Ovary (tissue), 10 donors: ENCODE measurements at regions of chr11 and their contacts with region 1.

Region 1: DNA sequence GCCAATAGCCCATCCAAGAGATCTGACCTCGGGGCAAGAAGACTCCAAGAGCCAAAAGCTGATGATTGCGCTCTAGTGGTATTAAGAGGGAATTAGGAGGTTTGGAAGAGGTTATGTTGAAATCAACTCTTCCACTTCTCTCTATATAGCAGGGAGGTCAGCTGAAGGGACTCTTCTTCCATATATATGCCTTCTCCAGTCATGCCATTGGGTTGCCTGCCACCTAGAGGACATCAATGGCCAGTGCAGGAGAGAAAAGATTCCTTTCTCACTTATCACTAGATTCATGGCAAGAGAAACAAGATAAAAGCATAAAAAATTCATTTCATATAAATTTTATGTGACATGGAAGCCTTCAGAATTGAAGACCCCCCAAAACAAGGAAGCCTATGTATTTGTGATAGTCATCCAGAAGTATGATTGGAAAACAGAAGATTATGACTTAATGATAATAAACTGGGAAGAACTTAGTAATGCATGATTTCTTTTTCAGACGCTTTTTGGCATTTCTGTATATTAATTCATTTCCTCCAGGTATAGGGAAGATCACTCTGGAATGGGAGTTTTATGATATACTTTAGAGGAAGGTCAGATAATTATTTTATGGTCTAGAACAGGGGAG is 435.1 kb upstream of the DDI1 start:
- DNase-seq: no peak
- H3K4me3 ChIP-seq: no peak overlapping the region
- H3K27ac ChIP-seq: no peak overlapping the region
- H3K4me1 ChIP-seq: no peaks in the 10 kb centered on the region
- H3K27me3 ChIP-seq: no peaks in the 10 kb centered on the region
- CTCF ChIP-seq: no peak
- EP300 ChIP-seq: no peak
- POLR2A ChIP-seq: no peak

Region 2: GRCh38 chr11:103619480-103619879 is 18.1 kb after region 1 on chr11:
- intact Hi-C with region 1: loop called in 1 of 4 experiments (anchors 1 kb)
- DNase-seq: no peak
- H3K4me3 ChIP-seq: no peak overlapping the region
- H3K27ac ChIP-seq: no peak overlapping the region
- H3K4me1 ChIP-seq: no peaks in the 10 kb centered on the region
- H3K27me3 ChIP-seq: no peaks in the 10 kb centered on the region
- CTCF ChIP-seq: no peak
- EP300 ChIP-seq: no peak
- POLR2A ChIP-seq: no peak

Region 3: DNA sequence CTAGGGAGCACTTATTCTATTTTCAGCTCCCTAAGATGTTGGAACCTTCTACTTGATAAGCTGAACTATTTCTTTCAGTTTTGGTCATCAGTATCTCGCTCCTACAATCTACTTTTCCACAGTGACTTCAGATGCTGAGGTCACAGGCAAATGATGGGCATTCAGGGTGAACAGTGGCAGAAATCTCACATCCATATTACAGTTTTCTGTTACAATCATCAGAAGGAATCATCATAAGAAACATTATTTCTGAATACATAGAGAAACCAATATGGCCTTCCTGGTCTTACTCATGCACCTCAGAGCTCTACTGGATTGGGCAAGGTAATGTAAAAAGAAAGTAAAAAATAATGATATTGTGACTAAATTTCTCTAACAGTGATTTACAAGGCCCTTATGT is 395.7 kb after region 1 on chr11:
- intact Hi-C with region 1: no loop called
- DNase-seq: no peak
- H3K4me3 ChIP-seq: no peak overlapping the region
- H3K27ac ChIP-seq: no peak overlapping the region
- H3K4me1 ChIP-seq: no peaks in the 10 kb centered on the region
- H3K27me3 ChIP-seq: no peaks in the 10 kb centered on the region
- CTCF ChIP-seq: no peak
- EP300 ChIP-seq: no peak
- POLR2A ChIP-seq: no peak